OCI-LY7 (cell line): ENCODE measurements at regions of chr2 and their contacts with region 1.

Region 1: DNA sequence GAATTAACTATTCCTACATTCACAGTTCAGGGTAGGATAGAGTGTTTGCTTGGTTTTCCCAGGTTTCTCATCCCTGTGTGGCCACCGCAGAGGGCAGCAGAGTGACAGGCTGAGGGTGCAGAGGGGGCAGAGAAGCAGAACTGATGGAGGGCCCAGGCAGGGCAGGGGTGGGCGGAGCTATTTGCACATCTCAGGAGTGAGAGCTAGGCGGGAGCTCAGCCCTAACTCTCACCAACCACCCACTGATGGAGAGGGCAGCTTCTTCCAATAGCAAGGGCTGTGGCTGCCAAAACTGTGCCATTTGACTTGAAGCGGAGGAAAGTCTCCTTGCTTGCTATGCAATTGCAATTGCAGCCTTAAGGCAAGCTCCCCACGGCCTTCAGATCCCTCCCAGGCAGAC is 12.0 kb upstream of the DARS1 start:
- DNase-seq: peak; percentile 77
- H3K4me3 ChIP-seq: peak overlapping the region; percentile 30
- H3K27ac ChIP-seq: peak overlapping the region; percentile 58
- H3K4me1 ChIP-seq: peaks cover 55% of the 10 kb centered on the region
- CTCF ChIP-seq: peak; percentile 84

Region 2: DNA sequence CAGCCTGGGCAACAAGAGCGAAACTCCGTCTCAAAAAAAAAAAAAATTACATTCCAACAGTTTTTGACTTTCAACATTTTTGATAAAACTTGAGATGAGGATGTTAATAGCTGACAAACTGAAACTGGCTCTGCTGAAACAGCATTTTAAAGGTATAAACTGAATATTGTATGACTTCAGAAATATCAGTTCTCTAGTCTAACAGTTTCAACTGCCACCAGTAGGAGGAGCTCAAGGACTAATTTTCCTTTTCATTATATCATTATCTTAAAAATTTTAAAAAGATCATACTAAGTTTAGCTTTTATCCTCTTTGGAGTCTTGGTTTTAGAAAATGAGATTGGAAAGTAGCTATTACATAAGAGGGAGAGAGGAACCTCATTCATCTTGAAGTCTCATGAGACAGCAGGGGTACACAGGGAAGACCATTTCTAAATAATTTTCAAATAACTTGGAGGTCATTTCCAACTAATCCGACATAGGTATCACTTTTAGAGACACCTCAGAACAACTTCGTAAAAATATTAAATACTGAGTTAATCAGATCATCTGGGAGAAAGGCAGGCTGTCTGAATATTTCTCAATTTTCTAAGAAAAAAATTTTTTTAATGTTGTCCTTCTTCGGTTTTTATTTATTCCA is 83.5 kb before region 1 on chr2:
- CTCF ChIA-PET with region 1: no interaction called
- POLR2A ChIA-PET with region 1: no interaction called
- intact Hi-C with region 1: loop called (anchors 5 kb)
- DNase-seq: peak; percentile 73
- H3K4me3 ChIP-seq: no peak overlapping the region
- H3K27ac ChIP-seq: peak overlapping the region; percentile 5
- H3K4me1 ChIP-seq: peaks cover 27% of the 10 kb centered on the region
- CTCF ChIP-seq: peak; percentile 96

Region 3: GRCh38 chr2:136015699-136016098 is 18.3 kb after region 1 on chr2:
- CTCF ChIA-PET with region 1: interaction called, 3 read pairs
- POLR2A ChIA-PET with region 1: interaction called, 18 read pairs
- intact Hi-C with region 1: no loop called
- DNase-seq: no peak
- H3K4me3 ChIP-seq: no peak overlapping the region
- H3K27ac ChIP-seq: no peak overlapping the region
- H3K4me1 ChIP-seq: peaks cover 23% of the 10 kb centered on the region
- CTCF ChIP-seq: no peak

Region 4: DNA sequence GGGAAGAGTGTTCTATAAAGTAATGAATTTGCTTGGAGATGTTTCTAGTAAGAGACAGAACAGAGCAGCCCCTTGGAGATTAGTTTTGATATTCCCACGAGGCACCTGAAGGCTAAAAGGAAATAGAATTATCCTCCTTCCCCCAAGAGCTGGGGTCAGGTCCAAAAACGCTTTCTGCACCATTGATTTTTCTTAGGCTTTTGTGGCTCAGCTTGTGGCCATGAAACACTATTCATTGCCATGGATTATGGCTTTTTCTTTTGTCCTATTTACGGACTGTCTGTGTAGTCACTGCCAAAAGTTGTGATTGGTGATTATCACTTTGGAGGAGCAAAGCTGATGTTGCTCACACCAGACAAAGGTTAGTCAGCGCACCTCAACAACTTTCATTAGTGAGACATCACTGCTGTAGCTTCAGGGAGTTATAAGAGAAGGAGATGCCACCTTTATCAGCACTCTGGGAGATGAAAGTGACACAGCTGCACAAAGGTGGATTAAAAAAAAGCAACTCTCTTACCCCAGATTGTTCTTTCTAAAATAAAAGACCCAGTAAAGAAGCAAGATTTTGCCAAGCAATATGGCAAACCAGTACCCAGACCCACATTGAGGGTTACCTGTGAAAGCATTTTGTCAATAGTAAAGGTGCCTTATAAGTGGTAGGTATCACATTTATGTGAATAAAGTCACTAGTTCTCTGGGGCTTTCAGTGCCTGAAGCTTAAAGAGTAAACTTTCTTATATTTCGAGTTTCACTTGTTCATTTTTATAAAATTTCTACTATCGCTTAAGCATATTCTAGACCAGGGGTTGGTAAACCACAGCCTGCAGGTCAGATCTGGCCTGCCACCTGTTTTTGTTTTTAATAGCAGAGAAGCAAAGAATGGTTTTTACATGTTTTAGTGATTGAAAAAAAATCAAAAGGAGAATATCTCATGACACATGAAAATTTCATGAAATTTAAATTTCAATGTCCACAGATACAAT is 110.0 kb after region 1 on chr2:
- CTCF ChIA-PET with region 1: interaction called, 4 read pairs
- POLR2A ChIA-PET with region 1: interaction called, 16 read pairs
- intact Hi-C with region 1: no loop called
- DNase-seq: no peak
- H3K4me3 ChIP-seq: peak overlapping the region; percentile 15
- H3K27ac ChIP-seq: peak overlapping the region; percentile 32
- H3K4me1 ChIP-seq: peaks cover 65% of the 10 kb centered on the region
- CTCF ChIP-seq: no peak; the same call in 1 of the 2 replicates

Region 5: GRCh38 chr2:136207030-136207623 is 209.7 kb after region 1 on chr2:
- CTCF ChIA-PET with region 1: interaction called, 7 read pairs
- POLR2A ChIA-PET with region 1: interaction called, 10 read pairs
- intact Hi-C with region 1: loop called (anchors 2 kb)
- DNase-seq: peak; percentile 96
- H3K4me3 ChIP-seq: peak overlapping the region; percentile 58
- H3K27ac ChIP-seq: peak overlapping the region; percentile 97
- H3K4me1 ChIP-seq: peaks cover 66% of the 10 kb centered on the region
- CTCF ChIP-seq: peak; percentile 11; the same call in 1 of the 2 replicates

Region 6: DNA sequence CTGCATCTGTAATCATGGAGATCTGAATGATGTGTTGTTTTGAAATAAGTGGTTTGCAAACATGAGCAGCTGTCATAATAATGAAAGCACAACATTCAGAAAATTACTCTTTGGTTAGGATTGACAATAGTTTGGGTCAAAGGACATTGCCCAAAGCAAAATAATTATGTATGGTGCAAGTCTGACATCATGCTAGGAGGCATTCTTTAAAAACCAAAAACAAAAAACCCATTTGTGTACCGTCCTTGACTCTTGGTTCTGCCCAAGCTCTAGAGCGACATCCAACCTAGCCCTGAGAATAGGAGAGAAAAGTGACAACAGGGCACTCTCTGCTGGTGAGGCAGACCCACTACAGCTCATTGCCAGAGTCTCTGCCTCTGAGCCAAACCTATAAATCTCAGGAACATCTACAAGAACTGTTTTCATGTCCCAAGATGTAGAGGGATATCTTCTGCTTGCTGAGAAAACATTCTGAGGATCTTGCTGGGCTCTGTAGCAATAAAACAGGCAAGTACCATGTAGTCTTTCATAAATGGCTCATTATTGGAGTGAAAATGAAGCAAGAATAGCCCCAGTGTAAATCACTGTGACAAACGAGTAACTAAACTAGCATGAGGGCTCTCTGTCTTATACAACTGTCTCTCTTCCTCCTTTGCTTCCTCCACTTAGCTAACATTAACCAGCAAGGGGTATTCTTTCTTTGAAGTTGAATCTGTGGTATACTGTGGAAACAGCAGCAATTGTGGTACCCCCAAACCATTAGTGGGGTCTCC is 387.3 kb after region 1 on chr2:
- CTCF ChIA-PET with region 1: interaction called, 7 read pairs
- POLR2A ChIA-PET with region 1: interaction called, 13 read pairs
- intact Hi-C with region 1: no loop called
- DNase-seq: peak; percentile 87
- H3K4me3 ChIP-seq: peak overlapping the region; percentile 19
- H3K27ac ChIP-seq: peak overlapping the region; percentile 93
- H3K4me1 ChIP-seq: peaks cover 87% of the 10 kb centered on the region
- CTCF ChIP-seq: peak; percentile 99